Sigmoid colon (tissue), 7 donors: ENCODE measurements at regions of chr3 and their contacts with region 1.

Region 1: GRCh38 chr3:195522254-195523023 is 20.7 kb downstream of the PPP1R2 start:
- DNase-seq: no peak
- H3K4me3 ChIP-seq: no peak overlapping the region
- H3K27ac ChIP-seq: no peak overlapping the region
- H3K4me1 ChIP-seq: peaks cover 0 to 4% (median 0%) of the 10 kb centered on the region in 4 donors
- H3K27me3 ChIP-seq: no peaks in the 10 kb centered on the region
- CTCF ChIP-seq: peak; percentile 29 to 80 (median 68)
- EP300 ChIP-seq: no peak
- POLR2A ChIP-seq: no peak

Region 2: DNA sequence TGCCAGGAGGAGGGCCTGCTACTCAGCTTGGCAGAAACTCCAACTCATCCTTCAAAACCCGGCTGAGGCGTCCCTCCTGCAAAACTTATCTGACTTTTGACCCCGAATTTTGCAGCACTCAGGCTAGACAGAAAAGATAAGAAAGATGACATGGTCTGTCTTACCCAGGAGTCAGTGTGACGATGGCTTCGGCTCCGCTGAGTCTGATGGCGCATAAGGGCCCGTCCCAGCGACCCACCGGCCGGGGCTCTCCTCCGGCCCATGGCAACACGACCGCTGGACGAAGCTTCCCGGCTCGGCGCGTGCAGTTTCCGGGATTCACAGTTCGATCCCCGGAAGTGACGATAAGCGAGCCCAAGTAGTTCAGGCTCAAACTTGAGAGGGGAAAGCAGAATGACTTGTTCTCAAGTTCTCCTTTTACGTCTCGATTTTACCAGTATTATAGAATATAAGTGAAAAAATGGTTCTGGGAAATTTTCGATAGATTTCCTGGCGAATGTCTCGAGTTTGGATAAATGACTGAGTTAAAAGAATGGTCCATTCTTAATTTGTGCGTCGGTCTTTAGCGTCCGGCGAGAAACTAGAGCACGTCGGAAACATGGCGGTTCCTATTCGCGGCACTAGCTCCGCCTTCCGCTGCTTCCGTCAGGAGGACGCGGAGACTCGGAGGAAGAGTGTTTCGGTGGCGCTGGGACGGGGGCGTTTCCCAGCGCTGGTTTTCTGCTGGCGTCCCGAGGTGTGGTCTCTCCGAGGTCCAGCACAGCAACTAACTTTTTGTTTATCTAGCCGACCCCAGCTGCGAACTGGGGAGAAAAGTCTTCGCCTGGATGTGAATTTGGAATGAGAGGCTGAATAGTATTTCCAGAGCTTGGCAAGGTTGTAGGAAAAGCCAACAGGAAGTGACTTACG is 850.3 kb before region 1 on chr3 and contains the start of gene LSG1:
- intact Hi-C with region 1: loop called (anchors 5 kb)
- DNase-seq: peak; percentile 96
- H3K4me3 ChIP-seq: peak within 1 kb of the TSS; percentile 65 to 88 (median 79)
- H3K27ac ChIP-seq: peak within 1 kb of the TSS; percentile 84 to 90 (median 86)
- H3K4me1 ChIP-seq: peaks cover 0 to 23% (median 20%) of the 10 kb centered on the region in 4 donors
- H3K27me3 ChIP-seq: no peaks in the 10 kb centered on the region
- CTCF ChIP-seq: no peak
- EP300 ChIP-seq: peak in 2 of 4 donors; percentile 2 to 18
- POLR2A ChIP-seq: peak in 1 of 2 donors; percentile 31
- total RNA-seq, gene LSG1: 21.0 to 32.4 (median 27.2) TPM

Region 3: DNA sequence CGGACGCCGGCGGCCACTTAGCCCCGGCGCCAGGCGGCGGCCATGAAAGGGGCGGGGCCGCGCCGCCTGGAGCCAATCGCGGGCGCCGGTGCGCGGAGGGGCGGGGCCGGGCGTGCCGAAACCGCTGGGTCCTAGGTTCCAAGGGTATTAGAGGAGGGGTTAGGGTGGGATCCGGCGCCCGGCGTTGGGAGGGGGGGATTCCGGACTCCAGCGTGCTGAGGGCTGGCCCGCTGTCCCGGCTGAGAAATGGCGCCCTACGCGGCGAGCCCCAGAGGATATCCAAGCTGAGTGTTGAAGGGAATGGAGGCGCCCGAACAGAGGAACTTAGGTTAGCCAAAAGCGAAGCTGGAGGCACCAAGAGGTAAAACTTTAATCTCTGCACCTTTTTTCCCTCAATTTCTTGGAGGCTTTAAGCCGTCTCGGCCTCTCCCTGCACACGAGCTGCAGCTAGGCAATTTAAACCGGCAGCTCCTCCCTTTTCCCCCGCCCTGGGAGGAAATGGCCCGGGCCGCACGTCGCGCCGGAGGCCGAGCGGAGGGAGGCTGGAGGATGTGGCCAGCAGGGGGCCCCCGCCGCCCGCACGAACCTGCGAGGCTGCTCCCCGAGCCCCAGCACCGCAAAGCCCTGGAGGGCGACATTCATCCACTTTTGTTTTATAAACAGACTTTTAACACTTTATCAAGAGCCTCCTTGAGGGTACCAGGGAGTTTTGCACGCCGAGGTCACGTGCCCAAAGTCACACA is 251.2 kb before region 1 on chr3 and contains the start of gene XXYLT1:
- intact Hi-C with region 1: loop called (anchors 1 kb)
- DNase-seq: peak; percentile 92
- H3K4me3 ChIP-seq: peak within 1 kb of the TSS; percentile 52 to 89 (median 74)
- H3K27ac ChIP-seq: peak within 1 kb of the TSS; percentile 85 to 94 (median 91)
- H3K4me1 ChIP-seq: peaks cover 0 to 24% (median 20%) of the 10 kb centered on the region in 4 donors
- H3K27me3 ChIP-seq: no peaks in the 10 kb centered on the region
- CTCF ChIP-seq: peak; percentile 90 to 94 (median 93)
- EP300 ChIP-seq: no peak
- POLR2A ChIP-seq: no peak
- total RNA-seq, gene XXYLT1: 11.1 to 13.8 (median 11.7) TPM